ENCODE measurements at regions of chr5 and their contacts with region 1.

Region 1: GRCh38 chr5:13498113-13498678 is 446.3 kb downstream of the DNAH5 start:
- DNase-seq: peak; percentile 93
- ATAC-seq: peak; percentile 88
- H3K4me3 ChIP-seq: no peak overlapping the region
- H3K27ac ChIP-seq: peak overlapping the region; percentile 88
- H3K4me1 ChIP-seq: peaks cover 52% of the 10 kb centered on the region
- H3K27me3 ChIP-seq: no peaks in the 10 kb centered on the region
- CTCF ChIP-seq: no peak

Region 2: DNA sequence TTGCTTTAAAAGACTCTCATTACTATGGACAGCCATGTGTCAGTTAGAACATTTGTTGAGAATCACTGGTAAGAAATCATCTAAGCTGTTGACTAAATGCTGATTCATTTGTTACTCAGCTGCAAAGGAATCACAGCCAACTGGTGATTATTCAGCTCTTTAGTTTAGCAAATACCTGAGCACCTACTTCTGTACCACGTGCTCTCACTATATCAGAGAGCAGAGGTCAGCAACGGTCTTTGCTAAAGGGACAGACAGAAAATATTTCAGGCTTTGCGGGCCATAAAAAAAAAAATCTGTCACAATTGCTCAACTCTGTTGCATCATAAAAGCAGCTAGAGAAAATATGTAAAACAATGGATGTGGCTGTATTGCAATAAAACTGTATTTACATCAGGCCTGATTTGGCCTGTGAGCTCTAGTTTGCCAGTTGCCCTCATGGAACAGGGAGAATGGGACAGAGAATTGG is 68.7 kb after region 1 on chr5:
- CTCF ChIA-PET with region 1: interaction called, 3 read pairs
- POLR2A ChIA-PET with region 1: no interaction called
- intact Hi-C with region 1: loop called (anchors 2 kb)
- DNase-seq: peak; percentile 99
- ATAC-seq: peak; percentile 68
- H3K4me3 ChIP-seq: no peak overlapping the region
- H3K27ac ChIP-seq: peak overlapping the region; percentile 95
- H3K4me1 ChIP-seq: peaks cover 32% of the 10 kb centered on the region
- H3K27me3 ChIP-seq: no peaks in the 10 kb centered on the region
- CTCF ChIP-seq: no peak

Region 3: GRCh38 chr5:13660072-13660471 is 161.9 kb after region 1 on chr5:
- CTCF ChIA-PET with region 1: no interaction called
- POLR2A ChIA-PET with region 1: no interaction called
- intact Hi-C with region 1: loop called (anchors 1 kb)
- DNase-seq: peak; percentile 53
- ATAC-seq: no peak
- H3K4me3 ChIP-seq: no peak overlapping the region
- H3K27ac ChIP-seq: no peak overlapping the region
- H3K4me1 ChIP-seq: peaks cover 19% of the 10 kb centered on the region
- H3K27me3 ChIP-seq: no peaks in the 10 kb centered on the region
- CTCF ChIP-seq: peak; percentile 57

Region 4: GRCh38 chr5:13814302-13814701 is 316.1 kb after region 1 on chr5:
- CTCF ChIA-PET with region 1: no interaction called
- POLR2A ChIA-PET with region 1: no interaction called
- intact Hi-C with region 1: loop called (anchors 1 kb)
- DNase-seq: peak; percentile 75
- ATAC-seq: peak; percentile 70
- H3K4me3 ChIP-seq: no peak overlapping the region
- H3K27ac ChIP-seq: no peak overlapping the region
- H3K4me1 ChIP-seq: peaks cover 7% of the 10 kb centered on the region; the same call in 1 of the 2 replicates
- H3K27me3 ChIP-seq: no peaks in the 10 kb centered on the region
- CTCF ChIP-seq: peak; percentile 78

Region 5: GRCh38 chr5:13957032-13957645 is 458.9 kb after region 1 on chr5:
- CTCF ChIA-PET with region 1: no interaction called
- POLR2A ChIA-PET with region 1: no interaction called
- intact Hi-C with region 1: loop called (anchors 5 kb)
- DNase-seq: peak; percentile 91
- ATAC-seq: peak; percentile 100
- H3K4me3 ChIP-seq: no peak overlapping the region
- H3K27ac ChIP-seq: no peak overlapping the region
- H3K4me1 ChIP-seq: no peaks in the 10 kb centered on the region
- H3K27me3 ChIP-seq: no peaks in the 10 kb centered on the region
- CTCF ChIP-seq: peak; percentile 97

Measured in PC-3 (cell line).